Stomach (tissue), 19 donors: ENCODE measurements at regions of chr1 and their contacts with region 1.

Region 1: GRCh38 chr1:7752512-7753417 is 18.3 kb upstream of the VAMP3 start:
- DNase-seq: peak; percentile 75 to 90
- H3K4me3 ChIP-seq: peak overlapping the region; percentile 27 to 36 (median 30)
- H3K27ac ChIP-seq: peak overlapping the region in 2 of 5 donors; percentile 25 to 32
- H3K4me1 ChIP-seq: peaks cover 0 to 18% (median 10%) of the 10 kb centered on the region in 4 donors
- H3K27me3 ChIP-seq: no peaks in the 10 kb centered on the region
- CTCF ChIP-seq: peak in 5 of 7 experiments; percentile 62 to 89 (median 73)
- EP300 ChIP-seq: no peak
- POLR2A ChIP-seq: no peak

Region 2: GRCh38 chr1:7478809-7479499 is 273.8 kb before region 1 on chr1:
- intact Hi-C with region 1: no loop called
- DNase-seq: peak; percentile 68 to 91
- H3K4me3 ChIP-seq: no peak overlapping the region
- H3K27ac ChIP-seq: peak overlapping the region; percentile 1 to 78 (median 63)
- H3K4me1 ChIP-seq: peaks cover 0 to 21% (median 6%) of the 10 kb centered on the region in 4 donors
- H3K27me3 ChIP-seq: no peaks in the 10 kb centered on the region
- CTCF ChIP-seq: no peak
- EP300 ChIP-seq: peak; percentile 65
- POLR2A ChIP-seq: no peak

Region 3: GRCh38 chr1:7672864-7673263 is 79.9 kb before region 1 on chr1:
- intact Hi-C with region 1: loop called (anchors 2 kb)
- DNase-seq: no peak
- H3K4me3 ChIP-seq: no peak overlapping the region
- H3K27ac ChIP-seq: no peak overlapping the region
- H3K4me1 ChIP-seq: peaks cover 0 to 16% (median 12%) of the 10 kb centered on the region in 4 donors
- H3K27me3 ChIP-seq: peaks cover 0 to 22% (median 4%) of the 10 kb centered on the region in 3 donors
- CTCF ChIP-seq: no peak
- EP300 ChIP-seq: no peak
- POLR2A ChIP-seq: no peak

Region 4: GRCh38 chr1:8554956-8555534 is 802.3 kb after region 1 on chr1:
- intact Hi-C with region 1: no loop called
- DNase-seq: no peak
- H3K4me3 ChIP-seq: no peak overlapping the region
- H3K27ac ChIP-seq: peak overlapping the region in 1 of 5 donors; percentile 16
- H3K4me1 ChIP-seq: peaks cover 0 to 28% (median 13%) of the 10 kb centered on the region in 4 donors
- H3K27me3 ChIP-seq: no peaks in the 10 kb centered on the region
- CTCF ChIP-seq: no peak
- EP300 ChIP-seq: no peak
- POLR2A ChIP-seq: no peak